GM12878 (cell line): ENCODE measurements at regions of chr12 and their contacts with region 1.

Region 1: DNA sequence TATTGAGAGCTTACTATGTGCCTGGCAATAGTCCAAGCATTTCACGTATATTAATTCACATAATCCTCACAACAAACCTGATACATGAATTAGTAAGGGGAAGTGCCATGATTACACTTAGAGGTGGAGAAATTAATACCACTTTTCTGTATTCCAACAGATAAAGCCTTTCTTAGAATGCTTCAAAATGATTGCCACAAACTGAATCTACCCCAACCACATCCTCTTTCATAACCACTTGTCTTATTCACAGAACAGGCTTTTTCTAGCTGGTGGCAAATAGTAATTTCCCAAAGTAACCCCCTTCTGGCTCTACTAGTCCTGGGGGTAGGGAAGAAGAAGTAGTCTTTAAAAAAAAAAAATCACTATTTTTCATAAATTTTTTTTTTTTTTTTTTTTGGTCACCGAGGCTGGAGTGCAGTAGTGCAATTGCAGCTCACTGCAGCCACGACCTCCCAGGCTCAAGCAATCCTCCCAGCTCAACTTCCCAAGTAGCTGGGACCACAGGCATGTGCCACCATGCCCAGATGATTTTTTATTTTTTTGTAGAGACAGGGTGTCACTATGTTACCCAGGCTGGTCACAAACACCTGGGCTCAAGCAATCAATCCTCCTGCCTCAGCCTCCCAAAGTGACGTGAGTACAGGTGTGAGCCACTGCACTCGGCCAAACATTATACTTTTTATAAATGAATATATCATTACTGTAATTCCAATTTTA is 59.0 kb upstream of the ARID2 start:
- DNase-seq: peak; percentile 53
- ATAC-seq: peak; percentile 75
- H3K4me3 ChIP-seq: no peak overlapping the region
- H3K27ac ChIP-seq: no peak overlapping the region
- H3K4me1 ChIP-seq: peaks cover 19% of the 10 kb centered on the region
- H3K27me3 ChIP-seq: no peaks in the 10 kb centered on the region
- CTCF ChIP-seq: no peak
- EP300 ChIP-seq: peak in 1 of 2 experiments; percentile 23; a peak in 1 of 4 replicates
- POLR2A ChIP-seq: no peak
- RAD21 ChIP-seq: no peak

Region 2: GRCh38 chr12:45557016-45557415 is 113.5 kb before region 1 on chr12:
- CTCF ChIA-PET with region 1: no interaction called
- POLR2A ChIA-PET with region 1: no interaction called
- RAD21 ChIA-PET with region 1: no interaction called
- SMC1A ChIA-PET with region 1: no interaction called
- in situ Hi-C with region 1: no loop called
- intact Hi-C with region 1: loop called (anchors 5 kb)
- DNase-seq: no peak
- ATAC-seq: no peak
- H3K4me3 ChIP-seq: no peak overlapping the region
- H3K27ac ChIP-seq: no peak overlapping the region
- H3K4me1 ChIP-seq: no peaks in the 10 kb centered on the region
- H3K27me3 ChIP-seq: no peaks in the 10 kb centered on the region
- CTCF ChIP-seq: no peak
- EP300 ChIP-seq: no peak
- POLR2A ChIP-seq: no peak
- RAD21 ChIP-seq: no peak

Region 3: DNA sequence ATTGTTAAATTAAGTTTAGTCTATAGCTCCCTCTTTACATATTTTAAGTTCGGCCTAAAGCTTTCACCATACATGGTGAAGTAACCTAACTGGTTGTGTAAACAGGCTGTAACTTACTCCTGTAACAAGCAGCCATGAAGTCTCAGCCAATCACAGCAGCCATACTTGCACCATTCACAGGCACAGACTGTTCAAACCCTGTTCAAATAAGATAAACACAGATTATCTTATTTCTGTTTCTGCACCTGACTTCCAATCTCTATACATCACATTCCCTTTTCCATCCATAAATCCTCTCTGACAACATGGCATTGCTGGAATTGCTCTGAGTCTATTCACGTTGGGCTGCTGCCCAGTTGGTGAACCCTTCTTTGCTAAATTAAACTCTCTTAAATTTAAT is 24.5 kb after region 1 on chr12:
- CTCF ChIA-PET with region 1: no interaction called
- POLR2A ChIA-PET with region 1: no interaction called
- RAD21 ChIA-PET with region 1: no interaction called
- SMC1A ChIA-PET with region 1: no interaction called
- in situ Hi-C with region 1: no loop called
- intact Hi-C with region 1: no loop called
- DNase-seq: no peak
- ATAC-seq: no peak
- H3K4me3 ChIP-seq: no peak overlapping the region
- H3K27ac ChIP-seq: no peak overlapping the region
- H3K4me1 ChIP-seq: no peaks in the 10 kb centered on the region
- H3K27me3 ChIP-seq: no peaks in the 10 kb centered on the region; a peak in 1 of 4 replicates
- CTCF ChIP-seq: no peak
- EP300 ChIP-seq: no peak
- POLR2A ChIP-seq: no peak
- RAD21 ChIP-seq: no peak

Region 4: DNA sequence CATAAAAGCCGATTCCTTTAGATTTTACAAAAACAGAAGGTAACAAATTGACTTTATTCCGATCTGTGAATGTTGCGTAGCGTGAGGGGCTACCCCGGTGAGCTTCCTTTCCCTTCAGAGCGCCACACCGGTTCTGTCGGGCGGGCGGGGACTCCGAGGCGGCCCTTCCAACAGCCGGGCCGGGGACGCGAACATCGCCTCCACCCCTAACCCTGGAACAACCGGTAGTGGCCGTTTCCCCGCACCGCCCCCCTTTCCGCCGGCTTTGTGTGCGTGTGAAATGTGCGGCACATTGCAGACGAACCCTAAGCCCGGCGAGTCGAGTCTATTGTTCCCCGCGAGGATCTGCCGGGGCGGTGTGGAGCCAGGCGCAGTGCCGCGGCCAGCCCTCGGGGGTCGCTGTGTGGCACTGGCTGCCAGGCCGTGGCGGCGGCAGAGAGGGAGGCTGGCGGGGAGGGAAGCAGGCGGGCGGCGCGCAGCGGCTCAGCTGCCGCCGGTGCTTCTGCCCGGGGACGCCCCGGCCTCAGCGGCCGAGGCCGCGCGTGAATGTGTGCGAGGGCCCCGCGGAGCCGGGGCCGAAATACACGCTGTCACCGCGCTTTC is 58.2 kb after region 1 on chr12:
- CTCF ChIA-PET with region 1: interaction called, 13 read pairs
- POLR2A ChIA-PET with region 1: no interaction called
- RAD21 ChIA-PET with region 1: interaction called, 5 read pairs
- SMC1A ChIA-PET with region 1: interaction called, 20 read pairs
- in situ Hi-C with region 1: no loop called
- intact Hi-C with region 1: loop called (anchors 2 kb)
- DNase-seq: peak; percentile 87
- ATAC-seq: peak; percentile 73
- H3K4me3 ChIP-seq: peak overlapping the region; percentile 93
- H3K27ac ChIP-seq: peak overlapping the region; percentile 95
- H3K4me1 ChIP-seq: no peaks in the 10 kb centered on the region
- H3K27me3 ChIP-seq: no peaks in the 10 kb centered on the region
- CTCF ChIP-seq: peak; percentile 94 to 98 (median 96)
- EP300 ChIP-seq: peak; percentile 36 to 45; a peak in 1 of 4 replicates
- POLR2A ChIP-seq: peak; percentile 96
- RAD21 ChIP-seq: peak; percentile 64

Region 5: GRCh38 chr12:46153268-46153872 is 482.9 kb after region 1 on chr12:
- CTCF ChIA-PET with region 1: no interaction called
- POLR2A ChIA-PET with region 1: no interaction called
- RAD21 ChIA-PET with region 1: no interaction called
- SMC1A ChIA-PET with region 1: no interaction called
- in situ Hi-C with region 1: no loop called
- intact Hi-C with region 1: no loop called
- DNase-seq: no peak
- ATAC-seq: peak; percentile 56
- H3K4me3 ChIP-seq: no peak overlapping the region
- H3K27ac ChIP-seq: no peak overlapping the region
- H3K4me1 ChIP-seq: no peaks in the 10 kb centered on the region
- H3K27me3 ChIP-seq: no peaks in the 10 kb centered on the region
- CTCF ChIP-seq: peak; percentile 59 to 76 (median 64); a peak in 5 of 6 replicates
- EP300 ChIP-seq: no peak
- POLR2A ChIP-seq: no peak
- RAD21 ChIP-seq: peak; percentile 93